ENCODE measurements at regions of chr1 and their contacts with region 1.

Region 1: GRCh38 chr1:204213668-204214662 is at the start of gene GOLT1A:
- DNase-seq: peak; percentile 93
- H3K4me3 Mint-ChIP-seq: peak within 1 kb of the TSS; percentile 68
- H3K27ac Mint-ChIP-seq: peak within 1 kb of the TSS; percentile 8
- H3K4me1 Mint-ChIP-seq: peaks cover 6% of the 10 kb centered on the region
- H3K27me3 Mint-ChIP-seq: no peaks in the 10 kb centered on the region
- CTCF ChIP-seq: peak; percentile 93
- total RNA-seq, gene GOLT1A: 11.5 and 12.7 TPM in 2 replicates

Region 2: DNA sequence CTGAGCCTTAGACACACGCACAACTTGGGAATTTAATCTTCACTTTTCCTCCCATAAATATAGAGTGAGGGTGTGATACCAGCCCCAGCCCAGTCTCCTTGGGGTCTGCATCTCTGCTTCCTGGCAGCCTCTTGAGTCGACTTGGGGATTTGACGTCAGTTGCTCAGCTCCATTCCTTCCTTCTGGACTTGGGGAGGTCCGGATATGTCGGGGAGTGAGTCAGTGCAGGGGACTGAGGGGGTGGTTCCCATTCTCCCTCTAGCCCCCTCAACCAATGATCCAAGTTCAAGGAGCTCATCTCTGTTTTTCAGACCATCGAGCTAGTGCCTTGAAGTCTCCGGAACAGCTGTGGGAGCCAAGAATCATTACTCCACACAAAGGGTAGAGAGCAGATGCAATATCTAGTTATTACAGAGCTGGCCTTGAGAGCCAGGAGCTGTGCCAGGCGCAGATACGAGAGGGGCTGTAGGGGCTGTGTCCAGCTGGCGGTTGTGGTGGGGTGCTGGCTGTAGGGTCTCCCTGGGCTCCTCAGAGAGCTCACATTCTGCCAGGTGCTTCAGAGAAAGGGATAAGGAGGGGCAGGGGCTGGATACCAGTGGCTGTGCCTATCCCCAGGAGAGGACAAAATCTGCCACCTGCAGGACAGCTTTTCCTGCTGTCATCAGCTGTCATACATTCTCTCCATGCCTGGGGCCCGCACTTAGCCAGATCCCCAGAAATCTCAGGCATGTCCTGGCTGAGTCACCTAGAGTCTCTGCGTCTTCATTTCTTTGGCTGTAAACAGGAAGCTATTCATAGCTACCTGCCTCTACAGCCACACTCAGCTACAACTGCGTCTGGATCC is 15.6 kb before region 1 on chr1:
- CTCF ChIA-PET with region 1: interaction called, 10 read pairs
- POLR2A ChIA-PET with region 1: no interaction called
- intact Hi-C with region 1: no loop called
- DNase-seq: peak; percentile 83
- H3K4me3 Mint-ChIP-seq: no peak overlapping the region
- H3K27ac Mint-ChIP-seq: no peak overlapping the region
- H3K4me1 Mint-ChIP-seq: peaks cover 6% of the 10 kb centered on the region
- H3K27me3 Mint-ChIP-seq: peaks cover 18% of the 10 kb centered on the region
- CTCF ChIP-seq: peak; percentile 37

Region 3: DNA sequence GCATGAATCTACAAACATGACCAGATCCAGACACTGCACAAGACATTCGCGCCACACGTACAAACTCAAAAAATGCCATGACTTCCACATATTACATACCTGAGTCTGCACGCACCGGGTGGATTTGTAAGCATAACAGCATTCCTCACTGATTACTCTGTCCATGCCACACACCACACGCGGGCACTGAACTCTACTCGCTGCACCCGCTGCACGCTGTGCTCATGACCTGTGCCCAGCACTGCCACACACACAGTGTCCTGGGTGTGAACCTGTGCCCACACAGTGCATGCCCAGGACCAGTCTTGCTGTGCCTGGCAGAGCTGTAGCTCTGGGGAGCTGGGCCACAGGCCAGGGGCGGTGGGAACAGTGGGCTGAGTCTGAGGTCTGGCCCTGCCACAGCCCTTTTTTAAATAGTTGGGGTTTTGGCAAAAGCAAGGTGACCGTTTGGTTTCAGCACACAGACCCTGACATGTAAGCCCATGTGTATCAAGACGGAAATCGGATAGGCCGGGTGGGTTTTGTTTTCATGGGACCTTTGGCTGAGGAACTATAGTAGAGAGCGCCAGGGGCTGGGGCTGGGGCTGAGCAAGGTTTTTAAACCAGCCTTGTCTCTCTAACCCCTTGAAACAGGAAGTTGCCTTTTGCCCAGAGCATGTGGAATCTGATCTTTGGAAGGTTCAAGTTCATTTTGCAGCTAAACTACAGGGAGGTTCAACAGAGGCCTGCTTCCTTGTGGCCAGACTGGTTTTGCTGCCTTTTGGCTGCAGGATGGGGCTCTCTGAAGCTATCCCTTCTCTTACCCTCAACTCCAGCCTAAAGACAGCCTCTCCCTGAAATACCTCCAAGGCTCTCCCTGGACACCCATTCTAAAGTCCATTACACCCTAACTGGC is 12.1 kb after region 1 on chr1:
- CTCF ChIA-PET with region 1: interaction called, 12 read pairs
- POLR2A ChIA-PET with region 1: interaction called, 5 read pairs
- intact Hi-C with region 1: no loop called
- DNase-seq: peak; percentile 34
- H3K4me3 Mint-ChIP-seq: no peak overlapping the region
- H3K27ac Mint-ChIP-seq: peak overlapping the region; percentile 1
- H3K4me1 Mint-ChIP-seq: peaks cover 18% of the 10 kb centered on the region
- H3K27me3 Mint-ChIP-seq: no peaks in the 10 kb centered on the region
- CTCF ChIP-seq: no peak

Measured in MCF 10A (cell line).